Adrenal gland (tissue), 19 donors: ENCODE measurements at regions of chr1 and their contacts with region 1.

Region 1: GRCh38 chr1:237327061-237327460 is 285.1 kb downstream of the RYR2 start:
- DNase-seq: no peak
- H3K4me3 ChIP-seq: no peak overlapping the region
- H3K27ac ChIP-seq: no peak overlapping the region
- H3K4me1 ChIP-seq: no peaks in the 10 kb centered on the region
- H3K27me3 ChIP-seq: no peaks in the 10 kb centered on the region
- CTCF ChIP-seq: no peak
- POLR2A ChIP-seq: no peak

Region 2: GRCh38 chr1:236768601-236769000 is 558.5 kb before region 1 on chr1:
- intact Hi-C with region 1: no loop called
- DNase-seq: no peak
- H3K4me3 ChIP-seq: no peak overlapping the region
- H3K27ac ChIP-seq: no peak overlapping the region
- H3K4me1 ChIP-seq: no peaks in the 10 kb centered on the region
- H3K27me3 ChIP-seq: no peaks in the 10 kb centered on the region
- CTCF ChIP-seq: no peak
- POLR2A ChIP-seq: no peak

Region 3: DNA sequence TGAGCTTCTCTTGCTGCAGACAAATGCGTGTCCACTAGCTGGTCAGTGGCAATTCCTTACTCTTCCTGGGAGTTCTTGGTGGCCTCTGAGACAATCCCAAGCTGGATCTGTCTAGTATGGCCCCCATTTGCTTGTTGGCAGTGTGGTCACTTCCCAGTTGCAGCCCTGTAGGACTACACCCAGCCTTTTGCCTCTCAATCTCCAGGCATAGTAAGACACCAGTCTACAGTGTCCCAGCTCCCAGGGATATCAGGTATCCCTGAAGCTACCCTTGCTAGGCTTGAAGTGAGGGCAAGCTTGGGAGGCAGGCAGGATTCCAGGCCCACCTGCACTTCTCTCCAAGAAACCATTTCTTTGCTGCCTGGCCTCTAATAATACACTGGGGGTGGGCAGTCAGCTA is 31.5 kb after region 1 on chr1:
- intact Hi-C with region 1: loop called in 1 of 2 experiments (anchors 2 kb)
- DNase-seq: no peak
- H3K4me3 ChIP-seq: no peak overlapping the region
- H3K27ac ChIP-seq: no peak overlapping the region
- H3K4me1 ChIP-seq: no peaks in the 10 kb centered on the region
- H3K27me3 ChIP-seq: no peaks in the 10 kb centered on the region
- CTCF ChIP-seq: no peak
- POLR2A ChIP-seq: no peak